GM13976 (cell line): ENCODE measurements at regions of chr11 and their contacts with region 1.

Region 1: DNA sequence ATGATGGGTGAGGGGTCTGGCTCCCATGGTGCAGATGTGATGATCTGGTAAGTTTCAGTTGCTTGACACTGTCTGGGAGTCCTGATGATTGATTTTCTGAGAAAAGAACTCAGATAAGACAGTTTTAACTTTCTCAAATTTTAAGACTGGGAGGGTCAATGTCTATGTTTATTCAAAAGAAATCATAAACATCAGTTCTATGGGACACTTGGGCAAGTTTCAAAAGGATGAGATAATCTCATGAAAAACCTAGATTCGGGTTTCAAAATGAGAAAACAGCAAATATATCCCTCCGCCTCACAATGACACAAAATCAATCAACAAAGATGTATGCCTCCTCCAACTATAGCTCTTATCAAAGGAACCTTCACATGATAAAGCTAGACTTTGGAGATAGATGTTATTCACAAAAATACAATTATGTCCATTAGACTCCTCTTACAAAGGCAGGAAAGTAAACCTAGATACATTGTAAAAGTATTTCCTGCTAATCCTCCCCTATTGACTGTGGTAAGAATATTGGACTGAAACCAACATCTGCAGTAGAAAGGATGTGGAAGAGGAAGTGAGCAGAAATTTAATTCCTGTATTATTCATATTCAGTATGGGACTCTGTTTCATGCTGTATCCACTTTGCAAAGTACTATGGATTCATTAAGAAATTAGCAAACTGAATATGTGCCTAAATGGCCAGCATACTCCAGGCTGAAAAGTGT is 21.6 kb downstream of the SVIP start:
- DNase-seq: no peak
- CTCF ChIP-seq: no peak

Region 2: DNA sequence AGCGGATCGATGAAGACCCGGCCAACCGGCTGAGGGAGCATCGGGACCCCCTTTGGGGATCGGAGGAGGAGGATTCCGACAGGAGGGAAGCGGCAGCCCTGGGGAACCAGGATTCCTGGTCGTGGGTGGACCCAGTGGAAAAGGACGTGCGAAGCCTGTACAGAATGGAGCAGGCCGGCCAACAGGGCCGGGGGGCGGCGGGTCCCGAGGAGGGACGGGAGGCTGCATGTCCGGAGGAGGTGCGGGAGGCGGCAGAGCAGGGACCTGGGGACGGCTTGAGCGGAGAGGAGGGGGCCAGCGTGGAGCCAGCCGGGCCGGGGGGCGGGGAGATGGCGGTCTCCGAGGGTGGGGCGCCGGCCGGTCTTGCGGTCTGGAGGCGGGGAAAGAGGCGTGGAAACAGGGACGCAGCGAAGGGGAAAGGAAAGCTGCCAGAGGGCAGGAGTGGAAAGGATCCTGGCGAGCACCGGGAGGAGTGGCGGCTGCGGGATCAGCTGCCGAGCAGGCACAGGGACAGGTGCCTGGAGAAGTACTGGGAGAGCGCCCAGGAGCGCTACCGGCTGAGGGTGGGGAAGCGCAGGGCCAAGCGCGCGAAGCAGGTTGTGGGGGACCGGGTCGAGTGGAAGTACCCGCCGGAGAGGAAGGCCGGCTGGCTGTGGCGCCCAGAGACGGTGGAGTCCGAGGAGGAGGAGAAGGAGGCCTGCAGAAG is 615.2 kb before region 1 on chr11 and contains the start of gene ANO5:
- in situ Hi-C with region 1: loop called (anchors 25 kb)
- DNase-seq: peak; percentile 78
- CTCF ChIP-seq: no peak

Region 3: GRCh38 chr11:22666688-22667439 is 141.1 kb before region 1 on chr11:
- in situ Hi-C with region 1: no loop called
- DNase-seq: peak; percentile 70
- CTCF ChIP-seq: no peak

Region 4: GRCh38 chr11:22920939-22921565 is 113.0 kb after region 1 on chr11:
- in situ Hi-C with region 1: no loop called
- DNase-seq: peak; percentile 32
- CTCF ChIP-seq: peak; percentile 69